ENCODE measurements at regions of chr14 and their contacts with region 1.

Region 1: DNA sequence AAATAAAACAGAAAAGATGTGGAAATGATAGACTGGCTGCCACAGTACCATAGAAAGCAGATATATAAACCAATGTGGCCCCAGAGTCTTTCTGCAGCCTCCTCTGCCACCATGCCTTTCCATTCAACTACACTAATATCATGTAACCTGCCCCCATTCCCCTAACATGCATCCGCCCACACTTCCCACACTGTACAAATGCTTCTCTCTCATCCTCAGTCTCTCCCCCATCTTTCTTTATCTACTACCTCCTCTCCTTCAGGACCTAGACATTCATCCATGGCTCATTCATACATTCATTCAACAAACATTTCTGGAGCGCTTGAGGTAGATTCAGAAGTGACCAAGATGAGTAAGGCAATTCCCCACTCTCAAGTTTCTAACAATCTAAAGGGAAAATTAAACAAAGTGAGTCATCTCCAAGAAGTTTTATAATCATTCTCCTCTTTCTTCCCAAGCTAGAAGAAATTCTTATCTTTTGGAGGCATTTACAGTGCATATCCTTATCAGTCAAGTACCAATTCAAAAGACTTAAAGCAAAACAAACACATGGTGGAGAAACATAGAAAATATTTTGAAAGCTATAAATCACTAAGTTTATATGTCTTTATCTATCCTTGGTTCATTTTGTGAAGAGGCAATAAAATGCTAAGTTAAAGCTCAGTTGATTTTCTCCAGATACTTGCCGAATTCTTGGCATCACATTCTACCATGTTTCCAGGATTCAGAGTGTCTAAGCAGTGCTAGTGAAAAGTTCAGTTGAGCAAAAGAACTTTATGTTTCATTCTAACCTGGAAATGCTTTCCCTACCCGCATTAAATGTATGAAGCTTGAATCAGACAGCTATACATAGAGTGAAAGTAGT is 70.5 kb upstream of the FRMD6 start:
- DNase-seq: peak in 1 of 2 experiments; percentile 16
- H3K4me3 ChIP-seq: no peak overlapping the region
- H3K4me3 Mint-ChIP-seq: peak overlapping the region; percentile 1
- H3K27ac Mint-ChIP-seq: peak overlapping the region; percentile 46
- H3K4me1 ChIP-seq: peaks cover 50% of the 10 kb centered on the region
- H3K4me1 Mint-ChIP-seq: peaks cover 63% of the 10 kb centered on the region
- H3K27me3 ChIP-seq: no peaks in the 10 kb centered on the region
- H3K27me3 Mint-ChIP-seq: no peaks in the 10 kb centered on the region
- CTCF ChIP-seq: no peak

Region 2: DNA sequence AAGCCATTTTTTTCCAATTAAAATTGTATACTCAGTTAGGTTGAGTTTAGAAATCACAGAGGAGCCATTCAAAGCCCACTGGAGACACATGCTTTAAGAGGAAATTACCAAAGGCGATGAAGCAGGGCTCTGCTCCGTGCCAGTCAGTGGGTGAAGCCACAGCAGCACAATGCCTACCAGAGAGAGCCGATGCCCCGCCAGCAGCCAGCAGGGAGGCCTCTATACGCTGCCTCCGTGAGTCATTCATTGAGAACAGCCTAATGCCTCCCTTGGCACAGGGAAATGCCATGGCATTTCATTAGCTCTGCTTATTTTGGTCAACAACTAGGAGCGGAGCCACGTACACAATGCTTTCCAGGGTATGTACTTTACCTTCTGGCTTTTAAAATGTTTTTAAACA is 127.4 kb before region 1 on chr14:
- CTCF ChIA-PET with region 1: no interaction called
- POLR2A ChIA-PET with region 1: no interaction called
- intact Hi-C with region 1: loop called (anchors 1 kb)
- DNase-seq: no peak
- H3K4me3 ChIP-seq: no peak overlapping the region
- H3K4me3 Mint-ChIP-seq: no peak overlapping the region
- H3K27ac Mint-ChIP-seq: no peak overlapping the region
- H3K4me1 ChIP-seq: peaks cover 18% of the 10 kb centered on the region
- H3K4me1 Mint-ChIP-seq: peaks cover 36% of the 10 kb centered on the region
- H3K27me3 ChIP-seq: no peaks in the 10 kb centered on the region
- H3K27me3 Mint-ChIP-seq: no peaks in the 10 kb centered on the region
- CTCF ChIP-seq: no peak

Region 3: DNA sequence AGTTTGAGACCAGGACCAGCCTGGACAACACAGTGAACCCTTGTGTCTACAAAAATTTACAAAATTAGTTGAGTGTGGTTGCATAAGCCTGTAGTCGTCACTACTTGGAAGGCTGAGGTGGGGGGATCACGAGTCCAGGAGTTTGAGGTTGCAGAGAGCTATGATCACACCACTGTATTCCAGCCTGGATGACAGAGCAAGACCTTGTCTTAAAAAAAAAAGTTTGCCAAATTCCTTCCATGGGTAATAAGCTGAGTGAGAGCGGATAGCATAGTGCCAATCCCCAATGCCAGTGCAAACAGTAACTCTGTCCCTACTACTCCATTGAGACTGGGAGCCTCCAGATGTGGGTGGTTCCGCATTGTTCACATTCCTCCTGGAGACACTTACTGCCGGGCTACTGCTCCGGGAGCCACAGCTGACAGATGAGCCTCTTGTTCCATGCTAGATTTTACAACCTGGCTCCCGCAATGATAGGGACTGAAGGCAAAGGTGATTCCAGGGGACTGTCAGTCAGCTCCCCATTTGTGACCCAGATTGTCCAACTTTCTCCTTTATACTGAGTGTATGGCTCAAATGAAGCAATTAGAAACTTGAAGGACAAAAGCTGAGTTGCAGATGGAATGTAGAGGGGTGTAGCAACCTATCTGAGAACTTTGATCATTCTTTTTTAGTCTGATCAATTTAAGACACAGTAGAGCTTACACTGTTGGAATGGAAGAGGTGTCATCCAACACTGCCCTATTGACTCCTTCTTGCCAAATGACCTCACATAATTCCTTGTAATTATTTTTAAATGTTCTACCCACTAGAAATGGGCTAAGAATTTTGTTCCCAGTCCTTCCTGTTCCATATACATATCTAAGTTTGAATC is 57.1 kb after region 1 on chr14:
- CTCF ChIA-PET with region 1: no interaction called
- POLR2A ChIA-PET with region 1: no interaction called
- intact Hi-C with region 1: loop called (anchors 5 kb)
- DNase-seq: peak; percentile 81 to 90
- H3K4me3 ChIP-seq: no peak overlapping the region
- H3K4me3 Mint-ChIP-seq: peak overlapping the region; percentile 23
- H3K27ac Mint-ChIP-seq: peak overlapping the region; percentile 75
- H3K4me1 ChIP-seq: peaks cover 42% of the 10 kb centered on the region
- H3K4me1 Mint-ChIP-seq: peaks cover 18% of the 10 kb centered on the region
- H3K27me3 ChIP-seq: no peaks in the 10 kb centered on the region
- H3K27me3 Mint-ChIP-seq: no peaks in the 10 kb centered on the region
- CTCF ChIP-seq: no peak

Measured in Caco-2 (cell line).